ENCODE measurements at regions of chr22 and their contacts with region 1.

Region 1: GRCh38 chr22:50276143-50276542 is 6.0 kb upstream of the MAPK11 start:
- DNase-seq: peak in 1 of 2 donors; percentile 53
- H3K4me3 ChIP-seq: no peak overlapping the region
- H3K27ac ChIP-seq: no peak overlapping the region
- H3K4me1 ChIP-seq: peaks cover 0 to 6% of the 10 kb centered on the region in 2 donors
- H3K27me3 ChIP-seq: no peaks in the 10 kb centered on the region
- CTCF ChIP-seq: peak in 3 of 4 experiments; percentile 19 to 56 (median 22)
- POLR2A ChIP-seq: no peak

Region 2: GRCh38 chr22:50325444-50326224 is 49.5 kb after region 1 on chr22:
- intact Hi-C with region 1: loop called (anchors 2 kb)
- DNase-seq: no peak
- H3K4me3 ChIP-seq: no peak overlapping the region
- H3K27ac ChIP-seq: no peak overlapping the region
- H3K4me1 ChIP-seq: peaks cover 0 to 7% of the 10 kb centered on the region in 2 donors
- H3K27me3 ChIP-seq: no peaks in the 10 kb centered on the region
- CTCF ChIP-seq: no peak
- POLR2A ChIP-seq: no peak

Region 3: GRCh38 chr22:50507991-50508884 is 232.1 kb after region 1 on chr22 and contains the start of gene NCAPH2:
- intact Hi-C with region 1: loop called (anchors 10 kb)
- DNase-seq: peak; percentile 96 to 98
- H3K4me3 ChIP-seq: peak within 1 kb of the TSS; percentile 98 to 99
- H3K27ac ChIP-seq: peak within 1 kb of the TSS; percentile 90 to 94
- H3K4me1 ChIP-seq: peaks cover 3 to 13% of the 10 kb centered on the region in 2 donors
- H3K27me3 ChIP-seq: no peaks in the 10 kb centered on the region
- CTCF ChIP-seq: peak in 2 of 4 experiments; percentile 12 to 18
- POLR2A ChIP-seq: peak; percentile 71 to 89
- total RNA-seq, gene NCAPH2: 51.7 to 155 (median 55.4) TPM